Activated CD4-positive, alpha-beta T cell treated with anti-CD3 and anti-CD28 coated beads, Interleukin-2, amount 10 ng/mL, durations not matched to agents 24 days and 14 days (primary cell): ENCODE measurements at regions of chr15 and their contacts with region 1.

Region 1: GRCh38 chr15:90001683-90002427 is 731 bp downstream of the ZNF710 start:
- DNase-seq: peak; percentile 90
- H3K4me3 Mint-ChIP-seq: peak overlapping the region; percentile 88
- H3K27ac Mint-ChIP-seq: peak overlapping the region; percentile 92
- H3K4me1 Mint-ChIP-seq: peaks cover 40% of the 10 kb centered on the region
- H3K27me3 Mint-ChIP-seq: peaks cover 4% of the 10 kb centered on the region

Region 2: GRCh38 chr15:90037961-90038631 is 36.2 kb after region 1 on chr15:
- intact Hi-C with region 1: loop called (anchors 2 kb)
- DNase-seq: peak; percentile 80
- H3K4me3 Mint-ChIP-seq: peak overlapping the region; percentile 48
- H3K27ac Mint-ChIP-seq: peak overlapping the region; percentile 79
- H3K4me1 Mint-ChIP-seq: peaks cover 65% of the 10 kb centered on the region
- H3K27me3 Mint-ChIP-seq: no peaks in the 10 kb centered on the region

Region 3: DNA sequence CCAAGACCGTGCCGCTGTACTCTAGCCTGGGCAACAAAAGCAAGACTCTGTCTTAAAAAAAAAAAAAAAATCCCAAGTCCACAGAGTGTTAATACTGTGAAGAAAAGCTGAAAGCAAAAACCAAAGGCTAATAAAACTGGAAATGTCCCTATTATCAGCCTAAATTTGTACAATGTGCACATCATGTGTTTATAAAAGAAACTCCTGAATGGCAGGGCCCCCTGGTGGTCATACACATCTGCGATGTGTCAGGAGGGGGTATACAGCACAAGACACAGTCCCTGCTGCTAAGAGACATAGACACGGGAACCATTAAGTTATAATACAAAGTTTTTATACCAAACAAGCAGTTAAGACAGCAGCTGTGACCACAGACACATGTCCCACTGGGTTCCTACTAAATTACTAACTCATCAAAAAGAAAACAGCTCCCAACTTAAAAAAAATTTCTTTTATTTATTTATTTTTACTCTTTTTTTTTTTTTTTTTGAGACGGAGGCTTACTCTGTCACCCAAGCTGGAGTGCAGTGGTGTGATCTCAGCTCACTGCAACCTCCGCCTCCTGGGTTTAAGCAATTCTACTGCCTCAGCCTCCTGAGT is 69.5 kb after region 1 on chr15:
- intact Hi-C with region 1: loop called (anchors 5 kb)
- DNase-seq: peak; percentile 93
- H3K4me3 Mint-ChIP-seq: no peak overlapping the region
- H3K27ac Mint-ChIP-seq: no peak overlapping the region
- H3K4me1 Mint-ChIP-seq: peaks cover 13% of the 10 kb centered on the region
- H3K27me3 Mint-ChIP-seq: no peaks in the 10 kb centered on the region

Region 4: GRCh38 chr15:90086868-90087268 is 85.0 kb after region 1 on chr15:
- intact Hi-C with region 1: loop called (anchors 5 kb)
- DNase-seq: peak; percentile 86
- H3K4me3 Mint-ChIP-seq: no peak overlapping the region
- H3K27ac Mint-ChIP-seq: peak overlapping the region; percentile 51
- H3K4me1 Mint-ChIP-seq: peaks cover 8% of the 10 kb centered on the region
- H3K27me3 Mint-ChIP-seq: no peaks in the 10 kb centered on the region